Sciatic nerve (tissue), 2 donors: ENCODE measurements at regions of chr4 and their contacts with region 1.

Region 1: DNA sequence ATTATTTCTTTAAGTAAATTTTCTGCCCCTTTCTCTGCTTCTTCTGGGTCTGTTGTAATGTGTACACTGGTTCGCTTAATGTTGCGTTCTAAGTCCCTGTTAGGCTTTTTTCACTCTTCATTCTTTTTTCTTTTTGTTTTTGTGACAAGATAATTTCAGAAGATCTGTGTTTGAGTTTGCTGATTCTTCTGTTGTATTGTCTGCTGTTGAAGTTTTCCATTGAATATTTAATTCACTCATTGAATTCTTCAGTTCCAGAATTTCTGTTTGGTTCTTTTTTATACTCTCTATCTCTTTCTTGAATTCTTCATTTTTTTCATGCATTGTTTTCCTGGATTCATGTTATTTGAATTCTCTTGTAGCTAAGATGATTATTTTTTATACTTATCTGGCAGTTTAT is 66.3 kb upstream of the NUDT6 start:
- DNase-seq: no peak
- ATAC-seq: no peak

Region 2: DNA sequence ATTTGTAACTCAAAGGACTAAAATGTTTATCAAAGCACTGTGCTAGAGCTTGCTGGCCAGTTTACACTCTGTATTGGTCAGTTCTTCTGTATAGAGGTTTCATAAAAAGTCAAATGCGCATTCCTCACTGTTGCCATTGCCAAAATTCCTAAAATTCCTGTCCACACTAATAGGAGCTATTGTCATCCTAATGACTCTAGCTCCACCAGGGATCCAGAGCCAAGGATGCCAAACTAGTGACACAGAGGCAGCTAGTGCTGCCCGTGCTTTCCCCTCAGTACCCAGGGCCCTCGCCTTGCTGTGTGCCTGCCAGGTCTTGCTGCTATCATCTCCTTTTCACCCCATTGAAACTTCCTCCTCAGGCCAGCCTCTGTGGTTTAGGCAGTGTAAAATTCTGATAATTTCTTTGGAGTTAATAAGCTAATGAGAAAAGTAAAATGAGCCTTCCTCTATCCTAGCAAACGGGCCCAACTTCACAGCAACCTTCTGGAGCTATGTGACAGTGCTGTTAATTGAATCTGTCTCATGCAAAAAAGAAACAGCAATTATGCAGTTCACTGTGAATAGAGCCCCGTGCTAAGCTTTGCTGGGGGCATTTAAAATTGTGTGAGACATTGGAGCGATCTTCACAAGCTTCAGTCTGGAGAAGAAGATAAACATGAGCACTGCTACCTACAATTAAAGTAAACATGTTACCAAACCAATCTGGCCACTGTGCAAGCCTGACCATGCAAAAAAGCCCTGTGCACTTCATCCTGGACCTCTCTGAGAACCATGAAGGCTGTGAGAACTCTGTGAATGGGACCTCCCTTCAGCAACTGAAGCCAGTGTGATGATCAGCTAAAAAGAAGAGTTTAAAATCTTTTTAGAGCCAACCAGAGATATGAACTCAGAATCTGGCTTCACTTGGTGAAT is 205.1 kb before region 1 on chr4:
- intact Hi-C with region 1: no loop called
- DNase-seq: no peak
- ATAC-seq: peak; percentile 88

Region 3: GRCh38 chr4:122963216-122963615 is 25.5 kb before region 1 on chr4:
- intact Hi-C with region 1: loop called (anchors 1 kb)
- DNase-seq: no peak
- ATAC-seq: no peak

Region 4: GRCh38 chr4:123588631-123589241 is 600.0 kb after region 1 on chr4:
- intact Hi-C with region 1: no loop called
- DNase-seq: no peak
- ATAC-seq: peak; percentile 96